Right cardiac atrium (tissue), 5 donors: ENCODE measurements at regions of chr17 and their contacts with region 1.

Region 1: GRCh38 chr17:6413065-6413464 is 21.9 kb downstream of the AIPL1 start:
- DNase-seq: no peak
- ATAC-seq: no peak
- H3K4me3 ChIP-seq: no peak overlapping the region
- H3K27ac ChIP-seq: no peak overlapping the region
- H3K4me1 ChIP-seq: no peaks in the 10 kb centered on the region
- H3K27me3 ChIP-seq: no peaks in the 10 kb centered on the region

Region 2: GRCh38 chr17:5598457-5598856 is 814.6 kb before region 1 on chr17:
- intact Hi-C with region 1: loop called in 1 of 4 experiments (anchors 5 kb)
- DNase-seq: no peak
- ATAC-seq: no peak
- H3K4me3 ChIP-seq: no peak overlapping the region
- H3K27ac ChIP-seq: no peak overlapping the region
- H3K4me1 ChIP-seq: no peaks in the 10 kb centered on the region
- H3K27me3 ChIP-seq: peaks cover 5% of the 10 kb centered on the region

Region 3: GRCh38 chr17:6069539-6070429 is 343.3 kb before region 1 on chr17 and contains the start of gene WSCD1:
- intact Hi-C with region 1: loop called in 1 of 4 experiments (anchors 10 kb)
- DNase-seq: peak; percentile 29 to 68 (median 65)
- ATAC-seq: peak; percentile 66 to 71
- H3K4me3 ChIP-seq: peak within 1 kb of the TSS; percentile 95
- H3K27ac ChIP-seq: no peak within 1 kb of the TSS
- H3K4me1 ChIP-seq: no peaks in the 10 kb centered on the region
- H3K27me3 ChIP-seq: no peaks in the 10 kb centered on the region
- total RNA-seq, gene WSCD1: 3.4 to 9.2 (median 7.2) TPM